Endothelial cell of umbilical vein (primary cell): ENCODE measurements at regions of chr17 and their contacts with region 1.

Region 1: GRCh38 chr17:39621523-39622379 is 5.0 kb upstream of the PPP1R1B start:
- DNase-seq: peak; percentile 87
- H3K4me3 ChIP-seq: no peak overlapping the region
- H3K27ac ChIP-seq: no peak overlapping the region
- H3K4me1 ChIP-seq: peaks cover 10% of the 10 kb centered on the region
- H3K27me3 ChIP-seq: peaks cover 24 to 26% of the 10 kb centered on the region in 2 experiments
- CTCF ChIP-seq: peak; percentile 100
- POLR2A ChIP-seq: no peak

Region 2: GRCh38 chr17:39527220-39527813 is 94.4 kb before region 1 on chr17:
- CTCF ChIA-PET with region 1: interaction called, 49 read pairs
- POLR2A ChIA-PET with region 1: no interaction called
- dilution Hi-C with region 1: no loop called
- intact Hi-C with region 1: loop called (anchors 1 kb)
- DNase-seq: peak; percentile 56
- H3K4me3 ChIP-seq: no peak overlapping the region
- H3K27ac ChIP-seq: no peak overlapping the region
- H3K4me1 ChIP-seq: peaks cover 9% of the 10 kb centered on the region
- H3K27me3 ChIP-seq: no peaks in the 10 kb centered on the region
- CTCF ChIP-seq: peak; percentile 36 to 49
- POLR2A ChIP-seq: no peak

Region 3: GRCh38 chr17:39573447-39574298 is 48.1 kb before region 1 on chr17:
- CTCF ChIA-PET with region 1: interaction called, 23 read pairs
- POLR2A ChIA-PET with region 1: no interaction called
- dilution Hi-C with region 1: no loop called
- intact Hi-C with region 1: loop called (anchors 2 kb)
- DNase-seq: peak; percentile 77
- H3K4me3 ChIP-seq: peak overlapping the region; percentile 9 to 67 (median 35)
- H3K27ac ChIP-seq: no peak overlapping the region
- H3K4me1 ChIP-seq: peaks cover 5% of the 10 kb centered on the region
- H3K27me3 ChIP-seq: peaks cover 0 to 2% of the 10 kb centered on the region in 2 experiments
- CTCF ChIP-seq: no peak
- POLR2A ChIP-seq: peak; percentile 59

Region 4: DNA sequence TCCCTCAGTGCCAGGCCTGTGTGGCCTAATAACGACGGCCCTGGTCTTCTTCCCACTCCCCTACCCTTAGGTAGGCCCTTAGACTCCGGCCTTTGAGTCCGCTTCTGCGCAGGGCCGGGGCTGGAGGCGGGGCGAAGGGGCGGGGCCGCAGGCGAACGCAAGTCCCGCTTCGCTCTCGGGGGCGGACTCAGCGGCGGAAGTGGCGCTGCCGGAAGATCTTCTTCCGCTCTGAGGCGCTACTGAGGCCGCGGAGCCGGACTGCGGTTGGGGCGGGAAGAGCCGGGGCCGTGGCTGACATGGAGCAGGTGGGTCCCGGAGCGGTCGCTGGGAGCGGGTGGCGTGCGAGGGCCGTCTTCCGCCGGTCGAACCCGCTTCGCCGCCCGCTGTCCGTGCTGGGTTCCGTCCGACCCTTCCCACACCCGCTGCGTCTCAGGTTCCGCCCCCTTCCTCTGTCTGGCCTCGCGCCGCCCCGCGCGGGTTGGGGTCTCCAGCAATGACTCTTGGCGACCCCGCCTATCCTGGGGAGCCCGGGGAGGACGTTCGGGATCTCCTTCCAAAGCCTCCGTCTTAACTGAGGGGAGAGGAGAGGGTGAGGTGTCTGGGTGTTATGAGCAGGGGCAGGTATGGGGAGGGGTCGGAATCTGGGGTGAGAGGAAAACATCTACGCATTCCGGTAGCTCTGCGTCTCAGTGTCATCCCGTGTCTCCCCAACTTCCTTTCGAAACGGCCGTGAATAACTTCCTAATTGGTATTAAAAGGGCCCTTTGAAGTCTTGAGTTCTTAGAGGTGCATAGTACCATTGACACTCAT is 15.4 kb after region 1 on chr17 and contains the start of gene STARD3:
- CTCF ChIA-PET with region 1: interaction called, 141 read pairs
- POLR2A ChIA-PET with region 1: no interaction called
- dilution Hi-C with region 1: no loop called
- intact Hi-C with region 1: no loop called
- DNase-seq: peak; percentile 88
- H3K4me3 ChIP-seq: peak within 1 kb of the TSS; percentile 90 to 96 (median 91)
- H3K27ac ChIP-seq: peak within 1 kb of the TSS; percentile 75
- H3K4me1 ChIP-seq: peaks cover 14% of the 10 kb centered on the region
- H3K27me3 ChIP-seq: peaks cover 0 to 3% of the 10 kb centered on the region in 2 experiments
- CTCF ChIP-seq: peak in 1 of 2 donors; percentile 5
- POLR2A ChIP-seq: peak; percentile 61
- total RNA-seq, gene STARD3: 48.9 and 51.0 TPM in 2 replicates

Region 5: DNA sequence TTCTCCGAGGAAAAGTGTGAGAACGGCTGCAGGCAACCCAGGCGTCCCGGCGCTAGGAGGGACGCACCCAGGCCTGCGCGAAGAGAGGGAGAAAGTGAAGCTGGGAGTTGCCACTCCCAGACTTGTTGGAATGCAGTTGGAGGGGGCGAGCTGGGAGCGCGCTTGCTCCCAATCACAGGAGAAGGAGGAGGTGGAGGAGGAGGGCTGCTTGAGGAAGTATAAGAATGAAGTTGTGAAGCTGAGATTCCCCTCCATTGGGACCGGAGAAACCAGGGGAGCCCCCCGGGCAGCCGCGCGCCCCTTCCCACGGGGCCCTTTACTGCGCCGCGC is 78.0 kb after region 1 on chr17 and contains the start of gene ERBB2:
- CTCF ChIA-PET with region 1: interaction called, 20 read pairs
- POLR2A ChIA-PET with region 1: no interaction called
- dilution Hi-C with region 1: no loop called
- intact Hi-C with region 1: no loop called
- DNase-seq: peak; percentile 57
- H3K4me3 ChIP-seq: peak within 1 kb of the TSS; percentile 44 to 58 (median 52)
- H3K27ac ChIP-seq: no peak within 1 kb of the TSS
- H3K4me1 ChIP-seq: no peaks in the 10 kb centered on the region
- H3K27me3 ChIP-seq: peaks cover 0 to 2% of the 10 kb centered on the region in 2 experiments
- CTCF ChIP-seq: no peak
- POLR2A ChIP-seq: peak; percentile 64
- total RNA-seq, gene ERBB2: 29.1 and 32.9 TPM in 2 replicates

Region 6: GRCh38 chr17:39952680-39953470 is 331.1 kb after region 1 on chr17:
- CTCF ChIA-PET with region 1: interaction called, 4 read pairs
- POLR2A ChIA-PET with region 1: no interaction called
- dilution Hi-C with region 1: no loop called
- intact Hi-C with region 1: loop called (anchors 10 kb)
- DNase-seq: peak; percentile 89
- H3K4me3 ChIP-seq: peak overlapping the region in 2 of 3 experiments; percentile 23 to 35
- H3K27ac ChIP-seq: no peak overlapping the region
- H3K4me1 ChIP-seq: peaks cover 3% of the 10 kb centered on the region
- H3K27me3 ChIP-seq: peaks cover 0 to 3% of the 10 kb centered on the region in 2 experiments
- CTCF ChIP-seq: no peak
- POLR2A ChIP-seq: no peak